Mammary epithelial cell (primary cell): ENCODE measurements at regions of chr16 and their contacts with region 1.

Region 1: GRCh38 chr16:82031116-82032084 is 3.7 kb upstream of the HSD17B2 start:
- DNase-seq: peak; percentile 65
- H3K4me3 ChIP-seq: no peak overlapping the region
- H3K27ac ChIP-seq: no peak overlapping the region
- H3K4me1 ChIP-seq: peaks cover 37% of the 10 kb centered on the region
- H3K27me3 ChIP-seq: no peaks in the 10 kb centered on the region
- CTCF ChIP-seq: peak; percentile 74 to 79

Region 2: DNA sequence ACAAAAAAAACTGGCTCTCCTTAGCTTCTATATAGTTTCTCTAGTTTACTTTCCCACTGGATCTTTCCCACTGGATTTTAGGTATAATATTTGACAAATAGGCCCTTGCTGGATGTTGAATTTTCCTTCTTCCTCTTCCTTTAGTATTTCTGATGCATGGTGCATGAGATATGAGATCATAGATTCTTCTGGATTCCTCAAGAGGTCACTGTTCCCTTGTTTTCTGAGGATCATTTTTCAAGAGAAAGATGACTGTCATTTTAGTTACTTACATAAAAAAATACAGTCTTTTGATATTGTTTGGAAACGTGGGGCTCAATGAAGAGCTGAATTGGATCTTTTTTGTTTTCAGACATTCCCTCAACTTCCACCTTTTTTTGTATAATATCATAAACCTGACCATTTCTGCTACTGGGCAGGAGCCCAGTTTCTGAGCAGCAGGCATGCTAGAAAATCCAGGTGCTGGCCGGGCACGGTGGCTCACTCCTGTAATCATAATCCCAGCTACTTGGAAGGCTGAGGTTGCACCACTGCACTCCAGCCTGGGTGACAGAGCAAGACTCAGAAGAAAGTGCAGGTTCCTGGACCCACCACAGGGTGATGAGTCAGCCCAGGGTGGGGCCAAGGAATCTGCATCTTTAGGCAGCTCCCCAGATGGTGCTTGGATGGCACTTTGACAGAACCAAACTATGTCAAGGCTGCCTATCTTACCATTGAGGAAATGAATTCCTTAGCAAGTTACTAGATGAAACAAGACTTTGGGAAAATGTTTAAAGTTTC is 90.4 kb before region 1 on chr16:
- CTCF ChIA-PET with region 1: no interaction called
- dilution Hi-C with region 1: no loop called
- in situ Hi-C with region 1: no loop called
- intact Hi-C with region 1: loop called (anchors 1 kb)
- DNase-seq: peak; percentile 63
- H3K4me3 ChIP-seq: no peak overlapping the region
- H3K27ac ChIP-seq: no peak overlapping the region
- H3K4me1 ChIP-seq: peaks cover 9% of the 10 kb centered on the region
- H3K27me3 ChIP-seq: no peaks in the 10 kb centered on the region
- CTCF ChIP-seq: peak; percentile 57 to 62

Region 3: DNA sequence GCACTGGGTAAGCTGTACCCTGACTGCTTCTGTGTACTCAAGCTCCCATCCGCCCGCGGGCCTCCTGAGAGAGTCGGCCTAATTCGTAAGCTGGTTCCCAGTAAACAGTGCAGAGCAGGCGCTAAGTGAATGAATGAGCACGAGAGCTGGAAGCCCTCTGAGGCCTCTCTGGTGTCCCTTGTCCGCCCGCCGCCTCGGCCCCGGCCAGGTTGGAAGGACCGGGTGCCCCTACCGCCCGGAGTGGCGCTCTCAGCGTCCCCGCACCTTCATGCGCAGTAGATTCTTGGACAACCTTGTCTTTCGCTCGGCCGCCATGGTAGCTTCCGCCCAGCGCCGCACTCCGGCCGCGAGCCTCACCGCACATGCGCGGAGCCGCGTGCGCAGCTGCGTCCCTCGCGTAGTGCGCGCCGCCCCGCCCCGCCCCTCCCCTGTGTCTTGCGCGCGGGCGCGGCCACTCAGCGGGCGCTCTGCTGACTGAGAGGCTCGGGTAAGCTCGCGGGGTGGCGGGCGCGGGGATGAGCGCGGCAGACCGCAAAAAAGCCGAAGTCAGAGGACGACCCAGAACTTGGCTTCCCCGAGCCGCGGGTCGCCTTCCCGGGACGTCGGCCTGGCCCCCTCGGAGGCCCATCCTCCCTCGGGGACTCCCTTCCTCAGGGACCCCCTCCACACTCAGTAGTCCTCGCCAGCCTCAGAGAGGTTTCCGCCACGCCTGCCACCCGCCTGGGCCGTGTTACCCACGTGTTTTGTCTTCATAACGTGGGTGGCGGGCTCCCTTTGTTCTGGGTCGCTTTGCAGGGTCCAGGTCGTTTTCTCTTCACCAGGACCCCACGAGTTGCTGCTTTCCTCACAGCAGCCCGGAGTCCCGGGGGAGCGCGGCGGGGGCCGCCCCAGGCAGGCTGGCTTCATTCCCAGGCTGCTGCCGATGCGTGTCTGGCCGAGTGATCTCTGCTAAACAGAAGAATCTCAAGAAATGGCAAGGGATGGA is 138.8 kb after region 1 on chr16 and contains the start of gene MPHOSPH6:
- CTCF ChIA-PET with region 1: no interaction called
- dilution Hi-C with region 1: no loop called
- in situ Hi-C with region 1: no loop called
- intact Hi-C with region 1: loop called (anchors 1 kb)
- DNase-seq: peak; percentile 91
- H3K4me3 ChIP-seq: peak within 1 kb of the TSS; percentile 84 to 100 (median 89)
- H3K27ac ChIP-seq: peak within 1 kb of the TSS; percentile 93
- H3K4me1 ChIP-seq: peaks cover 16% of the 10 kb centered on the region
- H3K27me3 ChIP-seq: no peaks in the 10 kb centered on the region
- CTCF ChIP-seq: no peak
- total RNA-seq, gene MPHOSPH6: 39.3 to 68.1 TPM

Region 4: GRCh38 chr16:82236415-82236814 is 205.0 kb after region 1 on chr16:
- CTCF ChIA-PET with region 1: interaction called, 10 read pairs
- dilution Hi-C with region 1: no loop called
- in situ Hi-C with region 1: no loop called
- intact Hi-C with region 1: no loop called
- DNase-seq: no peak
- H3K4me3 ChIP-seq: no peak overlapping the region
- H3K27ac ChIP-seq: no peak overlapping the region
- H3K4me1 ChIP-seq: peaks cover 10% of the 10 kb centered on the region
- H3K27me3 ChIP-seq: no peaks in the 10 kb centered on the region
- CTCF ChIP-seq: no peak

Region 5: DNA sequence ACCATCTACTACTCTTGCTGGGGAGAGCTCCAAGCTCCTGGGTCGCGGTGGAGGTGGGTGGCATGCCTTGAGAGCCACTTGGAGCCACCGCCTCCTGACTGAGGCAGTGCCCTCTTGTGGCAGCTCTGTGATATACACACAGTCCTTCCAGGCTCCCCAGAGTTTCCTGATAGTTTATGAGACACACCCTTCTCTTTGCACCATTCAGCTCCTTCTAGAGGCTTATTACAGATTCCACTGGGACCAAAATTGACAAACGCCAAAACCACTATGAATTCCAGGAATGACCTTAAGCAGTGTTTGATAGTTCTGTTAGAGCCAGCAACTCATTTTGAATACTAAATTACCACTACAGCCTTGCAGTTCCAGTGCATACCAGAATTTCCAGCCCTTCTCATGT is 425.3 kb after region 1 on chr16:
- CTCF ChIA-PET with region 1: no interaction called
- dilution Hi-C with region 1: no loop called
- in situ Hi-C with region 1: no loop called
- intact Hi-C with region 1: loop called (anchors 2 kb)
- DNase-seq: peak; percentile 46
- H3K4me3 ChIP-seq: no peak overlapping the region
- H3K27ac ChIP-seq: no peak overlapping the region
- H3K4me1 ChIP-seq: no peaks in the 10 kb centered on the region
- H3K27me3 ChIP-seq: peaks cover 6% of the 10 kb centered on the region
- CTCF ChIP-seq: peak; percentile 80 to 84